ENCODE measurements at regions of chr16 and their contacts with region 1.

Region 1: GRCh38 chr16:77759821-77760220 is 28.5 kb upstream of the VAT1L start:
- DNase-seq: no peak
- ATAC-seq: no peak
- H3K4me3 ChIP-seq: no peak overlapping the region
- H3K27ac ChIP-seq: no peak overlapping the region
- H3K4me1 ChIP-seq: no peaks in the 10 kb centered on the region
- H3K27me3 ChIP-seq: no peaks in the 10 kb centered on the region

Region 2: DNA sequence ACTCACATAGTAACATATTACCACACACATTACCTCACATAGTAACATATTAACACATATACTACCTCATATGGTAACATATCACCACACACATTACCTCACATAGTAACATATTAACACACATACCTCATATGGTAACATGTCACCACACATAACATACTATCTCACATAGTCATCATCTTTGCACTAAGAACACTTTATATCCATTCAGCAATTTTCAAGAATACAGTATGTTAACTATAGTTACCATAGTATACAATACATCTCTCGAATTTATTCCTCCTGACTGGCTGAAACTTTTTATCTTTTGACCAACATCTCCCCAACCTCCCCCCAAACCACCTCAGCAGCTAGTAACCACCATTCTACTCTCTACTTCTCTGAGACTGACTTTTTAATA is 29.9 kb before region 1 on chr16:
- intact Hi-C with region 1: loop called in 1 of 2 experiments (anchors 5 kb)
- DNase-seq: no peak
- ATAC-seq: no peak
- H3K4me3 ChIP-seq: no peak overlapping the region
- H3K27ac ChIP-seq: no peak overlapping the region
- H3K4me1 ChIP-seq: no peaks in the 10 kb centered on the region
- H3K27me3 ChIP-seq: no peaks in the 10 kb centered on the region

Measured in aorta (tissue), 5 donors.